Colonic mucosa (tissue), 4 donors: ENCODE measurements at regions of chr15 and their contacts with region 1.

Region 1: DNA sequence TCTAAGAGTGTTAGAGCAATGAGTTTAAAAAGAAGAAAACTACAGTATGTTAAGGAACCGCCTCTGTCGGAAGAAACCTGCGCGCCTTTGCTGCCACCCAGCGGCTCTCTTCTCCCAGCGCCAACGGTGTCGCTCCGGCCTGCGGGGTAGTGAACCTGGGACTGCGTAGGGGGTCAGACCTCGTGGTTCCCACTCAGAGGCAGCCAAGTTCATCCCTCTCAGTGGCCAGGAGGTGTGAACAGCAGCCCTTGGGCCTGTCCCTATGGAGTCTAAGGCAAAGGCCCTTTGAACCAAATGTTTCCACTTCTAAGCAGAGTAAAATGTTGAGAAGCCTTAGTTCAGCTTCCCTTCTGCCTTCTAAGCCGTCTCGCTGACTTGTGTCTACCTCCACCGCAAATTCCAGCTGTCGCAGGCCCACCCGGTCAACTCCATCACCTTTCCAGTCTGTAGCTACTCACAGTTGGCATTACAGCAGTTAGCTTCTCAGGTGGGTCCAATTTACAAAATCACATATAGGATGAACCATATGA is 980 bp upstream of the RAB27A start:
- DNase-seq: peak; percentile 88
- H3K4me3 ChIP-seq: peak overlapping the region; percentile 69
- H3K27ac ChIP-seq: peak overlapping the region; percentile 82
- H3K4me1 ChIP-seq: no peaks in the 10 kb centered on the region
- H3K27me3 ChIP-seq: no peaks in the 10 kb centered on the region
- CTCF ChIP-seq: peak; percentile 88

Region 2: DNA sequence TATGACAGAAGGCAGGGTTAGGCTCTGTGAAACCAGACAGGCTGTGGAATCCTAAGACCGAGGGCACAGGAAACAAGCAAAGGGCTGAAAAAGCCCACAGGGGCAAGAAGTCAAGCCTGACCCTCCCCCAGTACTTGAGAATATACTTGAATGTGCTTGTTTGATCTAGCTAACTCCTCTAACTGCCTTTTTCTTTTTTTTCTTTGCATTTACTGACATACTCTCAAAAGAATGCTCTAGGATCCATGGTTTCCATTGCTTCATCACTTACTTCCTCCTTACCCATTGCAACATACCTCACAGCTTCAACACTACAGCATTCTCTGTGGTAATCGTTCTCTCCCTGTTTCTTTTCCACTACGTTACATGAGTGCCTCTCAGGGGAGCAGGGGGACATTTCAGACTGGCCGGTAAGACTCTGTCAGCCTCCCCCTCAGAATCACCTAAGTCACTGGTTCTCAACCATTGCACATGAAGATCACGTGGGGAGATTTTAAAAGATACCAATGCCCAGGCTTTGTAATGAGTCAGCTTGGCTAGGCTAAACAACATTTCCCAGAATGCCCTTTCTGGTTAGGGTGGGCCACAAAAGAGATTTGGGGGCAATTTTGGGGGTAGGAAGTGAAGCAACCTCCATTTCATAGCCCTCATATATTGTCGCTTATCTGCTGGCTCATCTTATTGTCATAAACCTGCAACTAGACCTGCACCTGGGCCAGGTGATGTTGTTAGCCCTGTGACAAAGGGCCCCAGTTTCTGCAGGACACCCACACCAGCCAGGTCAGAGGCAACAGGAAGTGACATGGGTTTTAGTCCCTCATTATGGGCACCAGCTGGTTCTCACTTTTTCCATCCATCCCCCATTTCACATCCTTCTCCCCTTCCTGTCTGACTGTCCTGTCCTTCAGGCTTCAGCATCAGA is 69.2 kb before region 1 on chr15:
- intact Hi-C with region 1: loop called (anchors 2 kb)
- DNase-seq: no peak
- H3K4me3 ChIP-seq: no peak overlapping the region
- H3K27ac ChIP-seq: peak overlapping the region; percentile 47
- H3K4me1 ChIP-seq: no peaks in the 10 kb centered on the region
- H3K27me3 ChIP-seq: no peaks in the 10 kb centered on the region
- CTCF ChIP-seq: no peak

Region 3: GRCh38 chr15:55499151-55499550 is 208.6 kb after region 1 on chr15:
- intact Hi-C with region 1: no loop called
- DNase-seq: no peak
- H3K4me3 ChIP-seq: no peak overlapping the region
- H3K27ac ChIP-seq: no peak overlapping the region
- H3K4me1 ChIP-seq: no peaks in the 10 kb centered on the region
- H3K27me3 ChIP-seq: no peaks in the 10 kb centered on the region
- CTCF ChIP-seq: no peak